Caco-2 (cell line): ENCODE measurements at regions of chr11 and their contacts with region 1.

Region 1: DNA sequence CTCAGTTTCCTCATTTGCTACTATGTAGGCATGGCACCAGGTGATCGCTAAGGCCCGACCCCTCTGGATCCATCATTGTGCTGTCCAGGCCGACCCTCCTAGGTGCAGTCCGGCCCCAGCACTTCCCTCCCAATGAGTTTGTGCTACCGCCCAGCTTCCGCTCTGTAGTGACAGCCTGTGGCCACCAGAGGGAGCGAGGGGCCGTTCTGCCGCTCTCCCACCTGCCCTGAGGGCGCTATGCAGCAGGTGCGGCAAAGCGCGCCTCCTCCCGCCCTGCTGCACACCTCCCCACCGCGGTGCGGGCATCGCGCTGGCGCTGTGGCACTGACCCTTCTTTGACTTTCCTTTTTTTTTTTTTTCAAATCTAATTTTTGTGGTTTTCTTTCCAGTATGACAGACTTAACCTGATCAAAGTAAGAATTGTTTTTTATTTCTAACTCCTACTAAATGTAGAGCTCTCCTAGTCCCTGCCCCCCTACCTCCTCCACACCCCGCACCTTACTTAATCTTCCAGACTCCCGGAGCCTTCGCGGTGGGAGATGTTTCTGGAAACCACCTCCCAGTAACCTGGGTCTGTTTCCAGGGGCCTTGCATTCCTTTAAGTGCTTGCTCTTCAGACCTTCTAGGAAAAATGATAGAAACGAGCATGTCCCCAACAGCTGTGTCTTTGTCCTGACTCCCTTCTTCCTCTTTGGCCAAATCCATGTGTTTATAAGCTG is 73.7 kb downstream of the SCN3B start:
- DNase-seq: peak; percentile 87 to 93
- H3K4me3 ChIP-seq: no peak overlapping the region
- H3K4me3 Mint-ChIP-seq: peak overlapping the region; percentile 32
- H3K27ac Mint-ChIP-seq: no peak overlapping the region
- H3K4me1 ChIP-seq: peaks cover 19% of the 10 kb centered on the region
- H3K4me1 Mint-ChIP-seq: peaks cover 16% of the 10 kb centered on the region
- H3K27me3 ChIP-seq: peaks cover 4% of the 10 kb centered on the region; the same call in 1 of the 2 replicates
- H3K27me3 Mint-ChIP-seq: peaks cover 16% of the 10 kb centered on the region
- CTCF ChIP-seq: peak; percentile 100

Region 2: GRCh38 chr11:123461164-123461563 is 119.6 kb before region 1 on chr11:
- CTCF ChIA-PET with region 1: no interaction called
- POLR2A ChIA-PET with region 1: no interaction called
- intact Hi-C with region 1: no loop called
- DNase-seq: no peak
- H3K4me3 ChIP-seq: no peak overlapping the region
- H3K4me3 Mint-ChIP-seq: no peak overlapping the region
- H3K27ac Mint-ChIP-seq: no peak overlapping the region
- H3K4me1 ChIP-seq: no peaks in the 10 kb centered on the region
- H3K4me1 Mint-ChIP-seq: no peaks in the 10 kb centered on the region
- H3K27me3 ChIP-seq: no peaks in the 10 kb centered on the region
- H3K27me3 Mint-ChIP-seq: peaks cover 15% of the 10 kb centered on the region
- CTCF ChIP-seq: no peak

Region 3: GRCh38 chr11:123511037-123511870 is 69.5 kb before region 1 on chr11:
- CTCF ChIA-PET with region 1: interaction called, 6 read pairs
- POLR2A ChIA-PET with region 1: no interaction called
- intact Hi-C with region 1: loop called (anchors 1 kb)
- DNase-seq: peak; percentile 89
- H3K4me3 ChIP-seq: no peak overlapping the region
- H3K4me3 Mint-ChIP-seq: no peak overlapping the region
- H3K27ac Mint-ChIP-seq: no peak overlapping the region
- H3K4me1 ChIP-seq: no peaks in the 10 kb centered on the region
- H3K4me1 Mint-ChIP-seq: no peaks in the 10 kb centered on the region
- H3K27me3 ChIP-seq: no peaks in the 10 kb centered on the region; the same call in 1 of the 2 replicates
- H3K27me3 Mint-ChIP-seq: peaks cover 19% of the 10 kb centered on the region
- CTCF ChIP-seq: peak; percentile 96 to 97

Region 4: DNA sequence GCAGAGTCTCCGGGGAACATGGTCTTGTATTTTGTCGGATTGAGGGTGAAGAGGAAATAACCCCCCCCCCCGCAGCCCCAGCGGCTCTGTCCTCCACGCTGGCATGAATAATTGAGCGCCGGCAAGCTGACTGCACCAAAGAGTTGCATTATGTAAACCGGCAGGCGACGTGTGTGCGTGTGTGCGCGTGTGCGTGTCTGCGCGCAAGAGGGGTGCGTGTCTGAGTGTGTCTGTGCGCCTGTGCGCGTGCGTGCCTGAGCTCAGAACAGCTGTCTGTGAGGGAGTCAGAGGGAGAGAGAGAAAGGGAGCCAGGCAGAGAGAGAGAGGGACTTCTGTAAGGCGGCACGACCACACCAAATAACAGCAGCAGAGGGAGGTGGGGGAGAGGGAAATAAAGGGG is 20.7 kb before region 1 on chr11:
- CTCF ChIA-PET with region 1: interaction called, 10 read pairs
- POLR2A ChIA-PET with region 1: no interaction called
- intact Hi-C with region 1: no loop called
- DNase-seq: no peak
- H3K4me3 ChIP-seq: no peak overlapping the region
- H3K4me3 Mint-ChIP-seq: peak overlapping the region; percentile 46
- H3K27ac Mint-ChIP-seq: no peak overlapping the region
- H3K4me1 ChIP-seq: no peaks in the 10 kb centered on the region
- H3K4me1 Mint-ChIP-seq: no peaks in the 10 kb centered on the region
- H3K27me3 ChIP-seq: peaks cover 3% of the 10 kb centered on the region; the same call in 1 of the 2 replicates
- H3K27me3 Mint-ChIP-seq: peaks cover 29% of the 10 kb centered on the region
- CTCF ChIP-seq: no peak

Region 5: DNA sequence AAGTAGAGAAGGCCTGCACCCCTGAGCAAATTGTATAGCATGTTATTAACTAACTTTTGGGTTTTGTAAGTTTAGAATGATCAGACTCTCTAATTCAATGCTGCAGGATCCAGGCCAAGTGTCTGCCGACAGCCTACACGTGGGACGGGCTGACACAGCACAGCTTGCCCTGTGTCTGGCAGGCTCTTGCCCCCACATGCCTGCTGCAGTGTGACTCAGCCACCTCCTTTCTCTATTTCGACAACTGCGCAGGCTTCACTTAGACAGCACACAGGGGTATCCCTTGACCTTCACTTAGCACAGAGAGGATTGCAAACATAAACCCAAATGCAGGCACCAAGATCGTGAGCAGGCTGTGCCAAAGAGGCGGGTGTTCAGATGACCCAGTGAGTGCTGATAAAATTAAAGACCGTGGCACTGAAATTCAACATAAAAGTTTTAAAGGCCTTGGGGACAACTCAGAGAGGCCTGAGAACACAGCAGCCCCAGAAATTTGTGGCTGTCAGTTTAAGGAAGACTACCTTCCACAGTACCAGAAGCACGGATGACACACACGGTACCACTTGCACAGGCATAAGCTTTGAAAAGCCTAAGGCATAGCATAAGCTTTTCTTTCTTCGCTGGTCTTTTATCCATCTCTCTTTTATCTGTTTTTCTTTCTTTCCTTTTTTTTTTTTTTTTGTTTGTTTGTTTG is 35.9 kb after region 1 on chr11:
- CTCF ChIA-PET with region 1: interaction called, 7 read pairs
- POLR2A ChIA-PET with region 1: no interaction called
- intact Hi-C with region 1: loop called (anchors 1 kb)
- DNase-seq: no peak
- H3K4me3 ChIP-seq: no peak overlapping the region
- H3K4me3 Mint-ChIP-seq: no peak overlapping the region
- H3K27ac Mint-ChIP-seq: no peak overlapping the region
- H3K4me1 ChIP-seq: no peaks in the 10 kb centered on the region
- H3K4me1 Mint-ChIP-seq: no peaks in the 10 kb centered on the region
- H3K27me3 ChIP-seq: no peaks in the 10 kb centered on the region
- H3K27me3 Mint-ChIP-seq: peaks cover 14% of the 10 kb centered on the region
- CTCF ChIP-seq: no peak

Region 6: GRCh38 chr11:123640677-123641494 is 60.2 kb after region 1 on chr11:
- CTCF ChIA-PET with region 1: interaction called, 7 read pairs
- POLR2A ChIA-PET with region 1: no interaction called
- intact Hi-C with region 1: loop called (anchors 1 kb)
- DNase-seq: peak; percentile 62 to 69
- H3K4me3 ChIP-seq: no peak overlapping the region
- H3K4me3 Mint-ChIP-seq: no peak overlapping the region
- H3K27ac Mint-ChIP-seq: no peak overlapping the region
- H3K4me1 ChIP-seq: no peaks in the 10 kb centered on the region
- H3K4me1 Mint-ChIP-seq: no peaks in the 10 kb centered on the region
- H3K27me3 ChIP-seq: peaks cover 2% of the 10 kb centered on the region; the same call in 1 of the 2 replicates
- H3K27me3 Mint-ChIP-seq: peaks cover 37% of the 10 kb centered on the region
- CTCF ChIP-seq: peak; percentile 95 to 98

Region 7: GRCh38 chr11:123707606-123708205 is 127.0 kb after region 1 on chr11:
- CTCF ChIA-PET with region 1: interaction called, 41 read pairs
- POLR2A ChIA-PET with region 1: no interaction called
- intact Hi-C with region 1: loop called (anchors 1 kb)
- DNase-seq: peak; percentile 82 to 85
- H3K4me3 ChIP-seq: no peak overlapping the region
- H3K4me3 Mint-ChIP-seq: no peak overlapping the region
- H3K27ac Mint-ChIP-seq: no peak overlapping the region
- H3K4me1 ChIP-seq: peaks cover 3% of the 10 kb centered on the region; the same call in 1 of the 2 replicates
- H3K4me1 Mint-ChIP-seq: peaks cover 6% of the 10 kb centered on the region
- H3K27me3 ChIP-seq: no peaks in the 10 kb centered on the region; the same call in 1 of the 2 replicates
- H3K27me3 Mint-ChIP-seq: peaks cover 12% of the 10 kb centered on the region
- CTCF ChIP-seq: peak; percentile 90 to 93

Region 8: GRCh38 chr11:123815122-123815521 is 234.4 kb after region 1 on chr11:
- CTCF ChIA-PET with region 1: no interaction called
- POLR2A ChIA-PET with region 1: no interaction called
- intact Hi-C with region 1: loop called (anchors 10 kb)
- DNase-seq: no peak
- H3K4me3 ChIP-seq: no peak overlapping the region
- H3K4me3 Mint-ChIP-seq: no peak overlapping the region
- H3K27ac Mint-ChIP-seq: no peak overlapping the region
- H3K4me1 ChIP-seq: no peaks in the 10 kb centered on the region
- H3K4me1 Mint-ChIP-seq: no peaks in the 10 kb centered on the region
- H3K27me3 ChIP-seq: no peaks in the 10 kb centered on the region
- H3K27me3 Mint-ChIP-seq: peaks cover 8% of the 10 kb centered on the region
- CTCF ChIP-seq: no peak